CD8-positive, alpha-beta T cell (primary cell): ENCODE measurements at regions of chr6 and their contacts with region 1.

Region 1: DNA sequence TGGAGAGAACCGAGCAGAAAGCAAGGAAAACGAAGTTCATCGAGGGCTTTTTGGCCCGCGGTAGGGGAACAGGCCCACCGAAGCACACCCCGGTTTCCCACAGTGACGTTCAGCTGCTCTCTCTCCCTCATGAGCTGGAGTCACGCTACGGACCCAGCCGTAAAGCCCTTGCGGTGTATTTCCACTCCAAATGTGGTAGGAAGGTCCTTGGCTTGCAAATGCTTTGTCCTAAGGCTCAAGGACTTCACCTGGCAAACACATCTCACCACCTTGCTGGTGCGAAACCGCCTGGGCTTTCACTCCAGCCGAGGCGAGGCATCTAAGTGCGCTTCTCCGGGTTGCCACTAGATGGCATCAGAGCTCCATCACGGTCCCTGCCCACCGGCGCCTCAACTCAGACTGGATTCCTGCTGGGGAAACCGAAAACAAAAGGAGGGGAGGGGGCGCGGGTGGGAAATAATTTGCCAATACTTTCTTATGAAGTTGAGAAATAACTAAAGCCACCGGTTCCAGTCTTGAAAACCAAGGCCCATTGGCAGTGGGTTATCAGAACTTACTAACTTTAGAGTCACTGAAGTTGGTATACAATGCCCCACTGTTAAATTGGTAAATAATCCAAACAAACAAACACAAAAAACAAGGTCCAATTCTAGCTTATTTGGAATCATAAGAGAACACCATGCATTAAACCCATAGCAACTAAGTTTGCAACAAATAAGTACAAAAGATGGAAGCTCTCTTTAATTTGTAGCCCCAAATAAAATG is 13.4 kb upstream of the FOXC1 start:
- DNase-seq: peak; percentile 30 to 78 (median 67)
- ATAC-seq: peak; percentile 84
- H3K4me3 ChIP-seq: no peak overlapping the region
- H3K4me3 Mint-ChIP-seq: no peak overlapping the region
- H3K27ac ChIP-seq: no peak overlapping the region
- H3K27ac Mint-ChIP-seq: no peak overlapping the region
- H3K4me1 ChIP-seq: no peaks in the 10 kb centered on the region
- H3K4me1 Mint-ChIP-seq: peaks cover 2% of the 10 kb centered on the region
- H3K27me3 ChIP-seq: peaks cover 3 to 16% of the 10 kb centered on the region in 2 experiments
- H3K27me3 Mint-ChIP-seq: peaks cover 59% of the 10 kb centered on the region
- CTCF ChIP-seq: peak; percentile 76

Region 2: GRCh38 chr6:1524040-1524480 is 72.2 kb before region 1 on chr6:
- CTCF ChIA-PET with region 1: interaction called, 9 read pairs
- POLR2A ChIA-PET with region 1: no interaction called
- intact Hi-C with region 1: loop called in 1 of 2 experiments (anchors 2 kb)
- DNase-seq: peak; percentile 22 to 84 (median 73)
- ATAC-seq: peak; percentile 68
- H3K4me3 ChIP-seq: peak overlapping the region; percentile 25 to 43
- H3K4me3 Mint-ChIP-seq: peak overlapping the region; percentile 68
- H3K27ac ChIP-seq: peak overlapping the region; percentile 6 to 46
- H3K27ac Mint-ChIP-seq: peak overlapping the region; percentile 12
- H3K4me1 ChIP-seq: peaks cover 45% of the 10 kb centered on the region
- H3K4me1 Mint-ChIP-seq: peaks cover 26% of the 10 kb centered on the region
- H3K27me3 ChIP-seq: peaks cover 0 to 9% of the 10 kb centered on the region in 2 experiments
- H3K27me3 Mint-ChIP-seq: peaks cover 9% of the 10 kb centered on the region
- CTCF ChIP-seq: peak; percentile 65

Region 3: GRCh38 chr6:2103644-2104523 is 507.6 kb after region 1 on chr6:
- CTCF ChIA-PET with region 1: interaction called, 12 read pairs
- POLR2A ChIA-PET with region 1: no interaction called
- intact Hi-C with region 1: loop called in 1 of 2 experiments (anchors 2 kb)
- DNase-seq: peak in 2 of 9 experiments; percentile 37 to 53
- ATAC-seq: peak; percentile 48
- H3K4me3 ChIP-seq: no peak overlapping the region
- H3K4me3 Mint-ChIP-seq: no peak overlapping the region
- H3K27ac ChIP-seq: no peak overlapping the region
- H3K27ac Mint-ChIP-seq: no peak overlapping the region
- H3K4me1 ChIP-seq: no peaks in the 10 kb centered on the region
- H3K4me1 Mint-ChIP-seq: no peaks in the 10 kb centered on the region
- H3K27me3 ChIP-seq: peaks cover 0 to 2% of the 10 kb centered on the region in 2 experiments
- H3K27me3 Mint-ChIP-seq: no peaks in the 10 kb centered on the region
- CTCF ChIP-seq: peak; percentile 44

Region 4: DNA sequence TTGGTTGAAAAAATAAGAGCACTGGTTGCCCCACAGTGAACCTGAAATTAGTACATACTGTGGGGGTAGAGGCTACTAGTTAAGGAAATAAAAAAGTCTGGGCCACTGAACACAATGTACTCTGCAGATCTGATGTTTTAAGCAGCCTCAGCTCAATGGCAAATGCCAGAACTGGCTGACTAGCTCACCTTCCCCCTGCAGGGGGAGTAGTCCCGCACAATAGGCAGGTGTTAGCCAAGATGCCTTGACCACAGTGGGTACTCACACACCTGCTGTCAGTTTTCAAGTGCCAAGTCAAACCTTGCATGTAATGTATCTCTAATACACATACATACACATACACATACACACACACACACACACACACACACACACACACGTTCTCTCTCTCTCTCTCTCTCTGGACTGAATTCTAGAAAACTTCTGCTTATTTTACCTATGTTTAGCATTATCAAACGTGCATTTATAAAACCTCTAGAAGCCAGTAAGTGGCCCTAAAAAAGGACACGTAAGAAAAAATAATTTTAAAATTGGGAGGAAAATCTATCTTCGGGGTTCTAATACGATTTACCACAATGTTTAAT is 613.0 kb after region 1 on chr6:
- CTCF ChIA-PET with region 1: interaction called, 10 read pairs
- POLR2A ChIA-PET with region 1: no interaction called
- intact Hi-C with region 1: no loop called
- DNase-seq: peak in 4 of 9 experiments; percentile 18 to 51 (median 35)
- ATAC-seq: no peak
- H3K4me3 ChIP-seq: no peak overlapping the region
- H3K4me3 Mint-ChIP-seq: no peak overlapping the region
- H3K27ac ChIP-seq: no peak overlapping the region
- H3K27ac Mint-ChIP-seq: no peak overlapping the region
- H3K4me1 ChIP-seq: no peaks in the 10 kb centered on the region
- H3K4me1 Mint-ChIP-seq: peaks cover 3% of the 10 kb centered on the region
- H3K27me3 ChIP-seq: no peaks in the 10 kb centered on the region
- H3K27me3 Mint-ChIP-seq: no peaks in the 10 kb centered on the region
- CTCF ChIP-seq: no peak

Region 5: DNA sequence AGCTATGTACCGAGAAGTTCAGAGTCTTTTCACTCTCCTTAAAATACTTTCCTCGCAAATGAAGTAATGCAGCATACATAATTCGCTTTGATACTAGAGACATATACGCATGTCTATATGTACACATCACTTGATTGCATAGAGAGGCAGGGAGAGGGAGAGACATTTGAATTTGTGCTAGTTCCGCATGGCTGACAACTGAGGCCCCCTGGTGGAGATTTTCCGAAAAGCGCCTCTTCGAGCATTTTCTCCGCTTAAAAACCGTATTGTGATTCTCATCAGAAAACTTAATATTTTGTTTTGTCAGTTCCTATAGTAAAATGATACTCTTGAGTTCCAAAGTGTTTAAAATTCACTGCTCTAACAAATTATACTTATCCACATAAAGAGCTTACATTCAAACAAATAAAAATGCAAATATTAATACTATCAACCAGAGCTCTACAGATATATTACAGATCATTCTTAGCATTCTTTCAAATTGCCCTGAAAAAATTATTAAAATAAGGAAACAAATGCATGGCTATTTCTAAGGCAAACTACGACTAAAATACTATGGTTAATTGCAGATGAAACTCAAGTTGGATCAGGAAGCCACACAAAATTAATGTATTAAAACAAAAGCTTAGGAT is 1153.8 kb after region 1 on chr6:
- CTCF ChIA-PET with region 1: interaction called, 18 read pairs
- POLR2A ChIA-PET with region 1: no interaction called
- intact Hi-C with region 1: loop called (anchors 1 to 2 kb)
- DNase-seq: peak; percentile 46 to 78 (median 71)
- ATAC-seq: peak; percentile 86
- H3K4me3 ChIP-seq: no peak overlapping the region
- H3K4me3 Mint-ChIP-seq: no peak overlapping the region
- H3K27ac ChIP-seq: no peak overlapping the region
- H3K27ac Mint-ChIP-seq: no peak overlapping the region
- H3K4me1 ChIP-seq: peaks cover 8% of the 10 kb centered on the region
- H3K4me1 Mint-ChIP-seq: peaks cover 6% of the 10 kb centered on the region
- H3K27me3 ChIP-seq: peaks cover 0 to 2% of the 10 kb centered on the region in 2 experiments
- H3K27me3 Mint-ChIP-seq: peaks cover 5% of the 10 kb centered on the region
- CTCF ChIP-seq: peak; percentile 99